ENCODE measurements at regions of chr22 and their contacts with region 1.

Region 1: DNA sequence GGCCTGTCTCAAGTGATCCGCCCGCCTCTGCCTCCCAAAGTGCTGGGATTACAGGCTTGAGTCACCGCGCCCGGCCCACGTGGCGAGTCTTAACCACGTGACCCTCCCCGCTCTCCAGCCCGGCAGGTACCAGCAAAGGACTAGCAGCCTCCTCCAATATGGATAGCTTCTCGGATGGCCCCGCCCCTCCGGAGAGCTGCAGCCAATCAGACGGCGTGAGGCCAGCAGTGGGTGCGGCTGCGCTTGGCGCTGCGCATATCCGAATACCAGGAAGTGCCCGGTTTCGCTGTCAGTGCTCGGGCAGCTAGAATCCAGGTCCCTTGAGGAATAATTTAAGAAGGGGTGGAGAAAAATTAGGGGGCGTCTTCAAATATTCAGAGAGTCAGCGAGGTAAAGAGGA is 14.7 kb upstream of the PISD start:
- DNase-seq: peak; percentile 98
- ATAC-seq: peak; percentile 96
- H3K4me3 ChIP-seq: no peak overlapping the region
- H3K27ac ChIP-seq: peak overlapping the region in 1 of 2 donors; percentile 41
- H3K4me1 ChIP-seq: peaks cover 0 to 5% of the 10 kb centered on the region in 2 donors
- H3K27me3 ChIP-seq: no peaks in the 10 kb centered on the region

Region 2: DNA sequence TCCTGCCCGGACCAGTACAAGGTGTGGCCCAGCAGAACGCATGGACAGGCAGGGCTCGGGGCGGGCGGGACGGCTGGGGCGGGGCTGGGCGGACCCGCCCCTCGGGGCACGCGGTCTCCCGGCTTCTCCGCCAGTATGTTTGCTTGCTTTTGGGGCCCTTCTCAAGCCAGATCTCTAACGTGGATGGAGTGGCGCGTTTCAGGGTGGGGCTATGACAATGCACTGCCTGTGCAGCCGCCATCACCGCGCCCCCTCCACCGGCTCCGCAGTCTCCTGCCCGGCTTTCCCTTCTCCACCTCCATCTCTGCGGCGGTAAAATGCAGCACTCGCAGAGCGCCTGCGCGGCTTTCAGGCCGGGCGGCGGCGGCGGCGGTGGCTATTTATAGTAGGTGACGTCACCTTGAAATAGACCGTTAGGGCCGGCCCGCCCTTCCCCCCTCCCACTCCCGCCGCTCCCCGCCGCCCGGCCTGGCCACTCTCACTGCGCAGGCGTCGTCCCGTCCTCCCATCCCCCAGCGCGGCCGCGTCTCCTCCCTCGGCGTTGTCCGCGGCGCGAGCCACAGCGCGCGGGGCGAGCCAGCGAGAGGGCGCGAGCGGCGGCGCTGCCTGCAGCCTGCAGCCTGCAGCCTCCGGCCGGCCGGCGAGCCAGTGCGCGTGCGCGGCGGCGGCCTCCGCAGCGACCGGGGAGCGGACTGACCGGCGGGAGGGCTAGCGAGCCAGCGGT is 267.4 kb after region 1 on chr22 and contains the start of gene YWHAH:
- intact Hi-C with region 1: loop called in 1 of 2 experiments (anchors 5 kb)
- DNase-seq: peak; percentile 97 to 99
- ATAC-seq: peak; percentile 97
- H3K4me3 ChIP-seq: peak within 1 kb of the TSS; percentile 68 to 93
- H3K27ac ChIP-seq: peak within 1 kb of the TSS; percentile 83 to 94
- H3K4me1 ChIP-seq: peaks cover 0 to 3% of the 10 kb centered on the region in 2 donors
- H3K27me3 ChIP-seq: no peaks in the 10 kb centered on the region
- total RNA-seq, gene YWHAH: 207 to 538 TPM

Region 3: DNA sequence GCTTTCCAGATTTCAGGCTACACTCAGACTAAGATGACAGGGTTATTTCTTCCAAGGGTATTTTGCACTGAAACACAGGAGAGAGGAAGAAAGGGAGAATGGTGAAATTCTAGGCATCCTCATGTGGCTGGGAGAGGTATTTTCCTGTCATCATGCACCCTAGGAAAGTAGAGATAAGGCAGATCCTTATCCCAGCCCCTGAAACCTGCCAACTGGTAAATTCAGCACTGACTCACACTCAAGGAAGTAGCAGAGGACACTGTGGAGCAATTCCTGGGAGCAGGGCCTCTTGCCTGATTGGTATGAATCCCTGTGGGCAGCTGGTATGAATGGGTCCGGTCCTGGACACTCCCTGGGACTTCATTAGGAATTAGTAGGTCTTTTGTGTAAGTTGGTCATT is 328.8 kb after region 1 on chr22:
- intact Hi-C with region 1: no loop called
- DNase-seq: no peak
- ATAC-seq: no peak
- H3K4me3 ChIP-seq: no peak overlapping the region
- H3K27ac ChIP-seq: no peak overlapping the region
- H3K4me1 ChIP-seq: no peaks in the 10 kb centered on the region
- H3K27me3 ChIP-seq: no peaks in the 10 kb centered on the region

Measured in aorta (tissue), 5 donors.